Posterior vena cava (tissue), 2 donors: ENCODE measurements at regions of chr17 and their contacts with region 1.

Region 1: DNA sequence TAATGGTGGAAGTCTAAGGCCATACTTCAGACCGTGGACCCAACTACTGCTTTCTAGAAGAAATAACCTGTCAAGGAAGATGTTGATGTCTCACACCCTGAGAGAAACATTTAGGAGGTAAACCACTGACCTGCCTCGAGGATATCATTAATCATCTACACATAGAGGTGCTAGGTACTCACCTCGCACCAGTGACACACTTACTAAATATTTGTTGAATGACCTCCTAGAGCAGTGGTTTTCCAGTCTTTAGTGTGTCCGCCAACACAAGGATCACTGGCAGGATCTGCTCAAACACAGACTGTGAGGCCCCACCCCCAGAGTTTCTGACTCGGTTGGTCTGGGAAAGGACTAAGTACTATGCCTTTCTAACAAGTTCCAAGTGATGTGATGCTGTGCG is 197.4 kb upstream of the CACNG5 start:
- DNase-seq: no peak

Region 2: DNA sequence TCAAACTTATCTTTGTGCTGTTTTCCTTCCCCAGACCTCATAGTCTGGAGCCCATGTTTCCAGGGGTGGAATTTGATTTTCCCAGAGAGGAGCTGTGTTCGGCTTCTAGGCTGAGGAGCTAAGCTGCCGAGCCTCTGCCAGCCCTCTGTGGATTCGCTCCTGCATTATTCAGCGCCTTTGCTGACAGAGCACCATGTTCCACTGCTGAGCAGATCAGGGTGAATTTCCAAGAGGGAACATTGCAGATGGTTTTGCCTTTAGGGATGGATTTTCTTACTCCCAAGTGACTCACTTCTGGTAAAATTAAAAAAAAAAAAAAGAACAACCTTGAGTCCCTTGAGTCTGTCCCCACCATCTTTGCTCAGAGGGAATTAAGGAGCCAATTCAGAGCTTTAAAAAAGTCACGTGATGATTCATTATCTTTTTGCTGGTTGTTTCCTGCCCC is 105.6 kb before region 1 on chr17:
- intact Hi-C with region 1: loop called in 1 of 2 experiments (anchors 1 kb)
- DNase-seq: no peak